Sigmoid colon (tissue), 7 donors: ENCODE measurements at regions of chr6 and their contacts with region 1.

Region 1: DNA sequence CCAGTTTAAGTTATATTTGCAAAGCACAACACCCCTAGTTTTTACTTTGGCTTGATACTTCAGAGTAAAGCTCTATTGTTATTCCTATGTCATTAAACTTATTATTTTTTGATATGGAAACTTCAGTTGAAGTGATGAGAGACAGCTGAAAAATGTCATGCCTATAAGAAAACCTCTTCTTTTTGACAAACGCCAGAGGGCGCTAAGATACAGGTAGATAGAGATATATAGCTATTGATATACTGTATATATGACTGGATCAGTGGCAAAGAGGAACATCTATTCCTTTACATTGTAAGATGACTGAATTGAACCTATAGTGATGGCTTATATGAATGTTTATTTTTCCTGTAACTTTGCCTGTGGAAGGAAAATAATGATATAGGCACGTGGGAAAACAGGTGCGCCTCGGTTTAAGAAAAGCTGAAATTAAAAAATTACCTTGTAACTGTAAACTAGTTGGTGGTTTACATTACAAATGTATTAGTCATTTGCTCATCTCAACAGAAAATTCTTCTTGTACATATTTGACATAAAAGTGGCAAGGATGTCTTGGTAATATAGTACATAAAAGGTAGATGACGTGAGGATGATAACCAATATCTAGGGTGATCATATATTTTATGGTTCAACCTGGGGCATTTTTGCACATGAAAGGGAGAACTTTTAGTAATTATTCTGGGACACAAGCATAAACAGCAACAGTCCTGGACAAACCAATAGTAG is 74.1 kb downstream of the LAMA4 start:
- DNase-seq: peak; percentile 66
- H3K4me3 ChIP-seq: no peak overlapping the region
- H3K27ac ChIP-seq: peak overlapping the region; percentile 11 to 62 (median 46)
- H3K4me1 ChIP-seq: peaks cover 0 to 26% (median 12%) of the 10 kb centered on the region in 4 donors
- H3K27me3 ChIP-seq: no peaks in the 10 kb centered on the region
- CTCF ChIP-seq: peak; percentile 61 to 76 (median 64)
- EP300 ChIP-seq: no peak
- POLR2A ChIP-seq: no peak

Region 2: GRCh38 chr6:112100561-112100960 is 79.7 kb before region 1 on chr6:
- intact Hi-C with region 1: no loop called
- DNase-seq: no peak
- H3K4me3 ChIP-seq: no peak overlapping the region
- H3K27ac ChIP-seq: no peak overlapping the region
- H3K4me1 ChIP-seq: no peaks in the 10 kb centered on the region
- H3K27me3 ChIP-seq: no peaks in the 10 kb centered on the region
- CTCF ChIP-seq: no peak
- EP300 ChIP-seq: no peak
- POLR2A ChIP-seq: no peak

Region 3: GRCh38 chr6:112253841-112254816 is 73.9 kb after region 1 on chr6 and contains the start of gene LAMA4:
- intact Hi-C with region 1: loop called (anchors 2 kb)
- DNase-seq: peak; percentile 77
- H3K4me3 ChIP-seq: peak within 1 kb of the TSS; percentile 62 to 84 (median 76)
- H3K27ac ChIP-seq: peak within 1 kb of the TSS; percentile 88 to 95 (median 91)
- H3K4me1 ChIP-seq: peaks cover 0 to 41% (median 33%) of the 10 kb centered on the region in 4 donors
- H3K27me3 ChIP-seq: no peaks in the 10 kb centered on the region
- CTCF ChIP-seq: no peak
- EP300 ChIP-seq: peak in 1 of 4 donors; percentile 3
- POLR2A ChIP-seq: peak; percentile 6 to 49
- total RNA-seq, gene LAMA4: 95.3 to 225 (median 140) TPM

Region 4: GRCh38 chr6:112269114-112269513 is 88.9 kb after region 1 on chr6:
- intact Hi-C with region 1: loop called (anchors 5 kb)
- DNase-seq: no peak
- H3K4me3 ChIP-seq: no peak overlapping the region
- H3K27ac ChIP-seq: peak overlapping the region; percentile 62 to 81 (median 77)
- H3K4me1 ChIP-seq: peaks cover 0 to 20% (median 14%) of the 10 kb centered on the region in 4 donors
- H3K27me3 ChIP-seq: no peaks in the 10 kb centered on the region
- CTCF ChIP-seq: peak in 1 of 4 experiments; percentile 23
- EP300 ChIP-seq: no peak
- POLR2A ChIP-seq: no peak

Region 5: DNA sequence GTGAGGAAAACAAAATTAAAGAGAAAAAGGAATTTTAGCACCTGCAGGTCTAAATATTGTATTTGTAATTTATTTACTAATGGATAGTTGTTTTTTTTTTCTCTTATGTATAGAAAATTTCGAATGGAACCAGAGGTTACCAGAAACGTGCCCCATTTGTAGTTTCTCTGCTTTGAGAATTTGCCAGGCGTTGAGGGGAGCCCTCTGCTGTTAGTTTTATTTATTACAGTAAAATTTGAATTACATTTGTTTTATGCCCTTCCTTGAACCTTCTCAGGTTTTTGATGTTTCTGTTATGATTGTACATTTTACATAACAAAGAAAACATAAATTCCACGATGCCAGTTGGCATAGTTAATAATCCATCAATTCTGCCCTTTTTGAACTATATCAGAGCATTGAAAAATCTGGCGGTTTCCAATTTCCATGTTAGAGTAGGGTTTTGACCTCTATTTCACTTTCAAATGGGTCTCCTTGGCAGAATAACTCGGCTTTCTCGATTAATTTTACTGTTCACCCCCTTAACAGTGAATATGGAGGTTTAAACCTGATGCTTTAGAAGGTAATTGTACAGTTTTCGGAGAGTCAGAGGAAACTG is 131.8 kb after region 1 on chr6:
- intact Hi-C with region 1: loop called (anchors 2 kb)
- DNase-seq: no peak
- H3K4me3 ChIP-seq: no peak overlapping the region
- H3K27ac ChIP-seq: peak overlapping the region in 1 of 4 donors; percentile 7
- H3K4me1 ChIP-seq: peaks cover 0 to 17% (median 4%) of the 10 kb centered on the region in 4 donors
- H3K27me3 ChIP-seq: no peaks in the 10 kb centered on the region
- CTCF ChIP-seq: peak; percentile 40 to 71 (median 68)
- EP300 ChIP-seq: no peak
- POLR2A ChIP-seq: no peak

Region 6: GRCh38 chr6:112372226-112372806 is 192.1 kb after region 1 on chr6:
- intact Hi-C with region 1: loop called (anchors 2 kb)
- DNase-seq: no peak
- H3K4me3 ChIP-seq: no peak overlapping the region
- H3K27ac ChIP-seq: no peak overlapping the region
- H3K4me1 ChIP-seq: no peaks in the 10 kb centered on the region
- H3K27me3 ChIP-seq: peaks cover 0 to under 1% (median 0%) of the 10 kb centered on the region in 3 donors
- CTCF ChIP-seq: peak in 1 of 4 experiments; percentile 50
- EP300 ChIP-seq: no peak
- POLR2A ChIP-seq: no peak

Region 7: GRCh38 chr6:112443179-112444065 is 263.2 kb after region 1 on chr6:
- intact Hi-C with region 1: no loop called
- DNase-seq: peak; percentile 84
- H3K4me3 ChIP-seq: no peak overlapping the region
- H3K27ac ChIP-seq: peak overlapping the region in 2 of 4 donors; percentile 2 to 17
- H3K4me1 ChIP-seq: peaks cover 0 to 11% (median 3%) of the 10 kb centered on the region in 4 donors
- H3K27me3 ChIP-seq: no peaks in the 10 kb centered on the region
- CTCF ChIP-seq: no peak
- EP300 ChIP-seq: no peak
- POLR2A ChIP-seq: no peak